Left cardiac atrium (tissue), 4 donors: ENCODE measurements at regions of chr5 and their contacts with region 1.

Region 1: GRCh38 chr5:81751009-81751835 is at the start of gene SSBP2:
- DNase-seq: peak; percentile 98
- ATAC-seq: peak; percentile 93 to 97
- total RNA-seq, gene SSBP2: 37.7 to 46.9 TPM

Region 2: GRCh38 chr5:81506900-81507588 is 244.2 kb before region 1 on chr5:
- intact Hi-C with region 1: loop called (anchors 5 to 10 kb)
- DNase-seq: peak; percentile 29
- ATAC-seq: peak; percentile 99 to 100

Region 3: GRCh38 chr5:81726297-81726696 is 24.9 kb before region 1 on chr5:
- intact Hi-C with region 1: no loop called
- DNase-seq: no peak
- ATAC-seq: no peak

Region 4: GRCh38 chr5:81773574-81773973 is 22.4 kb after region 1 on chr5:
- intact Hi-C with region 1: no loop called
- DNase-seq: no peak
- ATAC-seq: peak in 1 of 2 donors; percentile 14

Region 5: DNA sequence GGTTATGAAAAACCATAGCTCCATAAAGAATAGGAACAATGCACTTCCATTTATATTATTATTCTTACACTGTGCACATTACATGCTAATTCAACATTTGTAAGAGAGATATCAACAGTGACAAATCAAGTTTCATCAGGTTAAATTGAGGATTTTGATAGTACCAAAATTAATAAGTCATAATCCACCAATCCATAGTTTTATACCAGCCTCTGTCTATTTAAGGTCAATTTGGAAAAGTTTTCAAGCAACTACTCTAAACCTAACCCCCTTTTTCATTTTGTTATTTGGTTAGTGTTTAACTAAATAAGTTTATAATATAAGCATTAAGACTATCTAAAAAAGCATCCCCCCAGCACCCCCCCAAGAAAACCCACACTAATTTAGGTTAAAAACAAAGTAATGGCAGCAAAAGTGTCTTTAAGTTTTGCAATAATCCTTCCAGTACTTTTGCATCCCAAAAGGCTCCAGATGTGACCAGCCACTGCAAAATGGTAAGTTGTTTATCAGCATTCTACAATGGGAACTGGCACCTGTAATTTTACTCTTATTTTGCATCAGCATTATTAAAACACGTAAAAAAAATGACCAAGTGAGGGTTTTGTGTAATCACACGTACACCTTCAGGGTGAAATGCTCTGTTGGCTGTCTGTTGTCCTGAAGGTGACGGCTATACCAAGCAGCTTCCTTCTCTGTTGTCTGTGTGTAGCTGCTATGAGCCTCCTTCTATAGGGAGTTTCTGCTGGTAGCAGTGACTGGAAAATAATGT is 36.4 kb after region 1 on chr5:
- intact Hi-C with region 1: loop called in 1 of 2 experiments (anchors 5 kb)
- DNase-seq: peak; percentile 56
- ATAC-seq: peak; percentile 74 to 84

Region 6: GRCh38 chr5:81971712-81972495 is 220.7 kb after region 1 on chr5 and contains the start of gene ATG10:
- intact Hi-C with region 1: loop called in 1 of 2 experiments (anchors 10 kb)
- DNase-seq: peak; percentile 92
- ATAC-seq: peak; percentile 99 to 100
- total RNA-seq, gene ATG10: 5.1 to 6.2 TPM

Region 7: GRCh38 chr5:82031220-82032119 is 280.2 kb after region 1 on chr5:
- intact Hi-C with region 1: no loop called
- DNase-seq: no peak
- ATAC-seq: no peak